ENCODE measurements at regions of chr1 and their contacts with region 1.

Region 1: DNA sequence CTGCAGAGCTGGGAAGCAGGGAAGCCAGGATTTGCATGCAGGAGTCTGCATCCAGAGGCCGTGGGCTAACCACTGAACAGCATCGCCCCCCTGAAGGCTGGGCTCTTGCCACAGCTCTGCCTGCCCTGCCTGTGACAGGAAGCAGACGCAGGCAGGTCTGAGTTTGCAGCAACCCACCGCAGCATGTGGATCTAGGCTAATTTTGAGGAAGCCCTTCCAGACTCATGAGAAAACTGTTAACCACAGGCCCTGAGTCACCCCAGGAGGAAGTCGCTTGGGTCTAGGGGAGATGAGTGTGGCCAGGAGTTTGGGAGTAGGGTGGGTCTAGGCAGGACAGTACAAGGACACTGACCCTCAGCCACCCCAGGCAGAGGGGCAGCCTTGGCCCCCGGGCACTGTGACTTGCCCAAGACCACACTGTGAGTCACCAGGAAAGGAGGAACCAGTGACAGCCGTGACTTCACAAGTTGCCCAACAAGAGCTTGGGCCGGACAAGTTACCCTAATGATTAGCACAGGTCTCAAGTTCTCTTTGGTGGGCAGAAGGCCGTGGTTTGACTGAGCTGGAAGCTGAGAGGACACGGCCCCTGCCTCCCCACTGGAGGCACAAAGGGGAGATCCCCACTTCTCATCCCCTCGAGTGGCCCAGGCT is 904 bp downstream of the LAPTM5 start:
- DNase-seq: peak; percentile 66
- H3K4me3 Mint-ChIP-seq: peak overlapping the region; percentile 97
- H3K27ac Mint-ChIP-seq: peak overlapping the region; percentile 96
- H3K4me1 Mint-ChIP-seq: peaks cover 79% of the 10 kb centered on the region
- H3K27me3 Mint-ChIP-seq: no peaks in the 10 kb centered on the region

Region 2: GRCh38 chr1:29960876-29961275 is 795.8 kb before region 1 on chr1:
- intact Hi-C with region 1: no loop called
- DNase-seq: no peak
- H3K4me3 Mint-ChIP-seq: no peak overlapping the region
- H3K27ac Mint-ChIP-seq: no peak overlapping the region
- H3K4me1 Mint-ChIP-seq: no peaks in the 10 kb centered on the region
- H3K27me3 Mint-ChIP-seq: no peaks in the 10 kb centered on the region

Region 3: GRCh38 chr1:30645807-30646206 is 110.9 kb before region 1 on chr1:
- intact Hi-C with region 1: no loop called
- DNase-seq: no peak
- H3K4me3 Mint-ChIP-seq: no peak overlapping the region
- H3K27ac Mint-ChIP-seq: no peak overlapping the region
- H3K4me1 Mint-ChIP-seq: no peaks in the 10 kb centered on the region
- H3K27me3 Mint-ChIP-seq: peaks cover 3% of the 10 kb centered on the region

Region 4: GRCh38 chr1:30743584-30744059 is 13.0 kb before region 1 on chr1:
- intact Hi-C with region 1: loop called (anchors 2 kb)
- DNase-seq: peak; percentile 70
- H3K4me3 Mint-ChIP-seq: peak overlapping the region; percentile 49
- H3K27ac Mint-ChIP-seq: peak overlapping the region; percentile 84
- H3K4me1 Mint-ChIP-seq: peaks cover 89% of the 10 kb centered on the region
- H3K27me3 Mint-ChIP-seq: no peaks in the 10 kb centered on the region

Region 5: GRCh38 chr1:31054349-31054748 is 297.7 kb after region 1 on chr1:
- intact Hi-C with region 1: loop called (anchors 10 kb)
- DNase-seq: no peak
- H3K4me3 Mint-ChIP-seq: no peak overlapping the region
- H3K27ac Mint-ChIP-seq: peak overlapping the region; percentile 84
- H3K4me1 Mint-ChIP-seq: peaks cover 42% of the 10 kb centered on the region
- H3K27me3 Mint-ChIP-seq: no peaks in the 10 kb centered on the region

Measured in activated T-helper 2 cell treated with anti-CD3 and anti-CD28 coated beads, Interferon-gamma antibody, Interleukin-2, Interleukin-4, amounts not matched to agents 10 μg/mL and 5 μg/mL and 100 μg/mL, durations not matched to agents 14 hours and 24 hours and 36 hours (primary cell).